ENCODE measurements at regions of chr18 and their contacts with region 1.

Region 1: DNA sequence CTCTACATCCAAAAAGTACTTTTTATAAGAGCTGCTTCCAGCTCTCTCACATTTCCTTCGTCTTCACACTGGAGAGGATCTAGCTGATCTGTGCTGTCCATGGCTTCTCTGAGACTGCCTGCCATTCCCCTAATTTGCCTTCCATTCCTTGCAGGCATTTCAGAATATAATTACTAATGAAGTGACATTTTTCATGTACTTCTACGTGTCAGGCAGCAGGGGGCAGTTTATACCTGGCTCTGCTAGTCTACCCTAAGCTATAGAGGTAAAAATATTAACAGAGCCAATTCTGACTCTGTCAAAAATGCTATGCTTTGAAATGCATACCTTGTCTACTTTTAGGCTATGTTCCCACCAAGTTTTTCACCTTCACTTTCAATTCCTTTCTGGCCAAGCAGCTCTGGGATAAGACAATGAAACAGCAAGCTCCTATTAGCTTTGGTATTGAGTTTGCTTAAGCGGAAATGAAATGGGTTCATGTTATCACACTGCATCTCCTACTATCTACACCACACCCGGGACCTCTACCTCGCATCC is 81.9 kb downstream of the MEP1B start:
- DNase-seq: peak; percentile 4
- ATAC-seq: peak; percentile 47
- H3K4me3 Mint-ChIP-seq: no peak overlapping the region
- H3K27ac Mint-ChIP-seq: no peak overlapping the region
- H3K4me1 Mint-ChIP-seq: no peaks in the 10 kb centered on the region
- H3K27me3 Mint-ChIP-seq: peaks cover 5% of the 10 kb centered on the region
- CTCF ChIP-seq: peak; percentile 52

Region 2: DNA sequence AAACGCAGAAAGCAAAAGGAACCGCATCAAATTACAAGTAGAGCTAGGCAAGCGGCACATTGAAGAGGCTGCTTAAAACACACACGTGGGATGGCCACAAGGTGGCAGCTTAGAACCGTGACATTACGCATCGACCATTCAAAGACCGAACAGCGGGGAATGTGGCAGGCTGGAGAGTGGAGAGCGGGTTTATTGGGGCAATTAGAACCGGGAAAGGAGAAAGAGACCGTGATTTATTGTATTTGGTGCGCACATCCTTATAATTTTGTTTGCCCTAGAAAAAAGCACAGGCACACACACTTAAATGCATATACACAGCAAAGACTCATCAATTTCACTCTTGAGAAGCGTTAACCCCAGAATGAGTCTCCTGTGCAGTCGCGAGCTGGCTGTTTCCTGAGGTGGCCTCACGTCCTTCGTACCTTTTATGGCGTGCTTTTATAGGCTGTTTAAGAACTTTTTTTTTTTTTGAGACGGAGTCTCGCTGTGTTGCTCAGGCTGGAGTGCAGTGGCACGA is 113.6 kb before region 1 on chr18:
- CTCF ChIA-PET with region 1: interaction called, 17 read pairs
- POLR2A ChIA-PET with region 1: no interaction called
- intact Hi-C with region 1: loop called (anchors 10 kb)
- DNase-seq: peak; percentile 81
- ATAC-seq: peak; percentile 91
- H3K4me3 Mint-ChIP-seq: peak overlapping the region; percentile 52
- H3K27ac Mint-ChIP-seq: no peak overlapping the region
- H3K4me1 Mint-ChIP-seq: peaks cover 3% of the 10 kb centered on the region
- H3K27me3 Mint-ChIP-seq: peaks cover 3% of the 10 kb centered on the region
- CTCF ChIP-seq: peak; percentile 91

Region 3: DNA sequence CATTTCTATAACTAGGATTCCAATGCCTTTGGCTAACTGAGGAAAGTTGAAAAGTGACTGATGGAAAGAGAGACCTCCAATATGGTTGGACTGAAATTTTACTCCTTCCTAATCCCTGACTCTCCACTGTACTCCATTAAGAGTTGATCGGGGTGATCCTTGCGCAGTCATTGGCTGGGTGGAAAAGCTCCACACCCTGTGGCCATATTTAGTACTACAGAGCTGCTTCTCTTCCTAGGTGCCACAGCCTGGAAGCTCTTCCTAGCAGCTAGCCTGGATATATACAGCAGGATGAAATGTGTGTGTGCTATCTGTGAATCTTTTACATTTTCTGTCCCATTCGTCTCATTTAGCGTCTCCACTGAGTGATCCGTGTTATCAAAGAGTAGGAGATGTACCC is 10.7 kb before region 1 on chr18:
- CTCF ChIA-PET with region 1: interaction called, 15 read pairs
- POLR2A ChIA-PET with region 1: no interaction called
- intact Hi-C with region 1: no loop called
- DNase-seq: no peak
- ATAC-seq: no peak
- H3K4me3 Mint-ChIP-seq: no peak overlapping the region
- H3K27ac Mint-ChIP-seq: no peak overlapping the region
- H3K4me1 Mint-ChIP-seq: no peaks in the 10 kb centered on the region
- H3K27me3 Mint-ChIP-seq: peaks cover 12% of the 10 kb centered on the region
- CTCF ChIP-seq: no peak

Region 4: DNA sequence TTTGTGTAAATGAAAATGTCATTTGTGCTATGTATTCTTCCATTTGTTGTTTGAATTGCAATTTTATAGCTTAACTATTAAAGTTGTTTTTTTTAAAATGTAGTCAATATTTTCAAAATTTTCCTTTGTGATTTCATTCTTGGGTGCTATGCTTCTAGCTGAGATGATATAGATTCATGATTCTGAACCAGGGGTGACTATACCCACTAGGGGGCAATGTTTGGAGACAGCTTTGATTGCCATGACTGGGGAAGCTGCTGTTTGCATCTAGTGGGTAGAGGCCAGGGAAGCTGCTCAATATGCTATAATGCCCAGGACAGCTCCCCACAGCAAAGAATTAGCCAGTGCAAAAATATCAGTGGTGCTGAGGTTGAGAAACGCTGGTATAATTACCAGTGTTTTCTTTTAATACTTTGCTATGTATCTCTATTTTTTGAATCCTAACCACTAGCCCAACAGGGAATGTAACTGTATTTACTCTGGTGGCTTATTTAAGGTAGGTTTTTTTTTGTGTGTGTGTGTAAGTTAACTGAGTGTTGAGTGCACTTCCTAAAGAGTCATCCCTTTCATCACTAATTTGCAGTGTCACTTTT is 17.8 kb after region 1 on chr18:
- CTCF ChIA-PET with region 1: interaction called, 12 read pairs
- POLR2A ChIA-PET with region 1: no interaction called
- intact Hi-C with region 1: no loop called
- DNase-seq: peak; percentile 47
- ATAC-seq: no peak
- H3K4me3 Mint-ChIP-seq: no peak overlapping the region
- H3K27ac Mint-ChIP-seq: no peak overlapping the region
- H3K4me1 Mint-ChIP-seq: no peaks in the 10 kb centered on the region
- H3K27me3 Mint-ChIP-seq: peaks cover 4% of the 10 kb centered on the region
- CTCF ChIP-seq: peak; percentile 46

Region 5: DNA sequence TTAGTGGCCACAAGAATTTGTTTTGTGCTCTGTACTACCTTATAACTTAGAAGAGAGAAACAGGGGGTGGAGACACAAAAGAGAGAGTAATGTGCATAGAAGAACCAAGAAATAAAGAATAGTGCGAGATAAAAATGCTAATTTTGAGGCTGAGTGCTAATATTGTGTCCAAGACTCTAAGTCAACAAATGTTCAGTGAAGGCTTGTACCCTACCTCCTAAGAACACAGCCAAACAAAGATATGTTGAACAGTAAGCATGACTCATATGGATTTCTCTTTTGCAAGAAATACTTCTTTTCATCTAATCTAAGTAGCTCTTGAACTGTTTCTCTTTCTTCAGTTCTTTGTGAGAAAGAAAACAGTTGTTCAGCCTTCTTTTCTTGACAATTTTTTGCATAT is 153.7 kb after region 1 on chr18:
- CTCF ChIA-PET with region 1: no interaction called
- POLR2A ChIA-PET with region 1: no interaction called
- intact Hi-C with region 1: no loop called
- DNase-seq: no peak
- ATAC-seq: no peak
- H3K4me3 Mint-ChIP-seq: no peak overlapping the region
- H3K27ac Mint-ChIP-seq: no peak overlapping the region
- H3K4me1 Mint-ChIP-seq: no peaks in the 10 kb centered on the region
- H3K27me3 Mint-ChIP-seq: peaks cover 13% of the 10 kb centered on the region
- CTCF ChIP-seq: no peak

Region 6: GRCh38 chr18:32470713-32471633 is 199.2 kb after region 1 on chr18 and contains the start of gene GAREM1:
- CTCF ChIA-PET with region 1: interaction called, 13 read pairs
- POLR2A ChIA-PET with region 1: no interaction called
- intact Hi-C with region 1: loop called (anchors 10 kb)
- DNase-seq: peak; percentile 79
- ATAC-seq: peak; percentile 95
- H3K4me3 Mint-ChIP-seq: peak within 1 kb of the TSS; percentile 60
- H3K27ac Mint-ChIP-seq: no peak within 1 kb of the TSS
- H3K4me1 Mint-ChIP-seq: peaks cover 18% of the 10 kb centered on the region
- H3K27me3 Mint-ChIP-seq: peaks cover 44% of the 10 kb centered on the region
- CTCF ChIP-seq: peak; percentile 50
- total RNA-seq, gene GAREM1: not detected

Region 7: GRCh38 chr18:32552421-32553030 is 280.8 kb after region 1 on chr18:
- CTCF ChIA-PET with region 1: interaction called, 31 read pairs
- POLR2A ChIA-PET with region 1: no interaction called
- intact Hi-C with region 1: loop called (anchors 5 kb)
- DNase-seq: peak; percentile 72
- ATAC-seq: peak; percentile 87
- H3K4me3 Mint-ChIP-seq: no peak overlapping the region
- H3K27ac Mint-ChIP-seq: no peak overlapping the region
- H3K4me1 Mint-ChIP-seq: no peaks in the 10 kb centered on the region
- H3K27me3 Mint-ChIP-seq: peaks cover 11% of the 10 kb centered on the region
- CTCF ChIP-seq: peak; percentile 69

Measured in activated CD8-positive, alpha-beta T cell treated with anti-CD3 and anti-CD28 coated beads for 36 hours (primary cell).